ENCODE measurements at regions of chr4 and their contacts with region 1.

Region 1: GRCh38 chr4:153127760-153128494 is 76.3 kb upstream of the TRIM2 start:
- DNase-seq: peak; percentile 72 to 94 (median 83)
- ATAC-seq: peak; percentile 97
- H3K4me3 ChIP-seq: no peak overlapping the region
- H3K4me3 Mint-ChIP-seq: no peak overlapping the region
- H3K27ac ChIP-seq: no peak overlapping the region
- H3K27ac Mint-ChIP-seq: peak overlapping the region; percentile 43
- H3K4me1 ChIP-seq: peaks cover 4% of the 10 kb centered on the region
- H3K4me1 Mint-ChIP-seq: peaks cover 7% of the 10 kb centered on the region
- H3K27me3 ChIP-seq: no peaks in the 10 kb centered on the region
- H3K27me3 Mint-ChIP-seq: no peaks in the 10 kb centered on the region
- CTCF ChIP-seq: peak; percentile 94

Region 2: GRCh38 chr4:152850377-152850776 is 277.6 kb before region 1 on chr4:
- CTCF ChIA-PET with region 1: interaction called, 7 read pairs
- POLR2A ChIA-PET with region 1: no interaction called
- intact Hi-C with region 1: loop called (anchors 1 to 2 kb)
- DNase-seq: peak in 9 of 14 experiments; percentile 11 to 71 (median 28)
- ATAC-seq: peak; percentile 56
- H3K4me3 ChIP-seq: no peak overlapping the region
- H3K4me3 Mint-ChIP-seq: no peak overlapping the region
- H3K27ac ChIP-seq: no peak overlapping the region
- H3K27ac Mint-ChIP-seq: no peak overlapping the region
- H3K4me1 ChIP-seq: no peaks in the 10 kb centered on the region
- H3K4me1 Mint-ChIP-seq: peaks cover 28% of the 10 kb centered on the region
- H3K27me3 ChIP-seq: no peaks in the 10 kb centered on the region
- H3K27me3 Mint-ChIP-seq: no peaks in the 10 kb centered on the region
- CTCF ChIP-seq: no peak

Region 3: GRCh38 chr4:153115322-153116290 is 12.3 kb before region 1 on chr4:
- CTCF ChIA-PET with region 1: interaction called, 20 read pairs
- POLR2A ChIA-PET with region 1: interaction called, 60 read pairs
- intact Hi-C with region 1: loop called in 1 of 2 experiments (anchors 1 kb)
- DNase-seq: peak; percentile 43 to 92 (median 62)
- ATAC-seq: peak; percentile 54
- H3K4me3 ChIP-seq: peak overlapping the region; percentile 20
- H3K4me3 Mint-ChIP-seq: no peak overlapping the region
- H3K27ac ChIP-seq: peak overlapping the region; percentile 66
- H3K27ac Mint-ChIP-seq: no peak overlapping the region
- H3K4me1 ChIP-seq: peaks cover 66% of the 10 kb centered on the region
- H3K4me1 Mint-ChIP-seq: peaks cover 15% of the 10 kb centered on the region
- H3K27me3 ChIP-seq: no peaks in the 10 kb centered on the region
- H3K27me3 Mint-ChIP-seq: no peaks in the 10 kb centered on the region
- CTCF ChIP-seq: no peak

Region 4: DNA sequence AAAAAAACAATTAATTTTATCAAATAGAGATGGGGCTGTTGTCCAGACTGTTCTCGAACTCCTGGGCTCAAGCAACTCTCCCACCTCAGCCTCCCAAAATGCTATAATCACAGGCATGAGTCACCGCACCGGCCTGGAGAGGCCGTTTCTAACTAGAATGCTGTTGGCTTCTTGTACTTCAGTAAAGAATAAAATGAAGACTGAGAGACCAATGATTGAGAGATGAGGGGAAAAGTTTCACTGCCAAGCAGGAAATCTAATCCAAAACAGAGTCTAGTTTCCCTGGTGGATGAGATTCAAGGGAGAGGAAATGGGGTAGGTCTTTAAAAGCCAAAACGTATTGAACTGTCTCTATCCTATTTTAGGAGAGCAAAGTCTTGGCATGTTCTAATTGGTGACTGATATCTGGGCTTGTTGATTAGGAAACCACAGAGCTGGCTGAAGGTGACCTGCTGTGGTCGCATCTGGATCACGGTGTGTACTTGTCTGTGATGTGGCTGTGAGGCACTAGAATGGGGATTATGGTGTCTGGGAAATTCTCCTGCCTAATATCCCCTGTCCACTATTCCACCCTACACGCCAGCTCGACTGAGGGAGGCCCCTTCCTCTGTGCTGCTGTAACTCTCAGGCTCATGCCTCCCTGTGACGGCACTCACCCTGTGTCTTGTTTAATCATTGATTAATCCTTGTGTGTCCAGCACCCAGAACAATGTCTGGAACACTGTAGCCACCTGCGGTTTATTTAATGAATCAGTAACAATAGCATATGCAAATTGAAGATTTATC is 61.3 kb after region 1 on chr4:
- CTCF ChIA-PET with region 1: no interaction called
- POLR2A ChIA-PET with region 1: no interaction called
- intact Hi-C with region 1: no loop called
- DNase-seq: no peak
- ATAC-seq: no peak
- H3K4me3 ChIP-seq: no peak overlapping the region
- H3K4me3 Mint-ChIP-seq: no peak overlapping the region
- H3K27ac ChIP-seq: no peak overlapping the region
- H3K27ac Mint-ChIP-seq: no peak overlapping the region
- H3K4me1 ChIP-seq: no peaks in the 10 kb centered on the region
- H3K4me1 Mint-ChIP-seq: no peaks in the 10 kb centered on the region
- H3K27me3 ChIP-seq: no peaks in the 10 kb centered on the region
- H3K27me3 Mint-ChIP-seq: no peaks in the 10 kb centered on the region
- CTCF ChIP-seq: no peak